GM12878 (cell line): ENCODE measurements at regions of chrX and their contacts with region 1.

Region 1: GRCh38 chrX:63506320-63506719 is 155.2 kb upstream of the SPIN4 start:
- DNase-seq: no peak
- ATAC-seq: peak; percentile 65
- H3K4me3 ChIP-seq: no peak overlapping the region
- H3K27ac ChIP-seq: no peak overlapping the region
- H3K4me1 ChIP-seq: no peaks in the 10 kb centered on the region
- H3K27me3 ChIP-seq: no peaks in the 10 kb centered on the region
- CTCF ChIP-seq: peak in 2 of 3 experiments; percentile 29 to 39; a peak in 3 of 6 replicates
- EP300 ChIP-seq: no peak
- POLR2A ChIP-seq: no peak
- RAD21 ChIP-seq: peak; percentile 52

Region 2: DNA sequence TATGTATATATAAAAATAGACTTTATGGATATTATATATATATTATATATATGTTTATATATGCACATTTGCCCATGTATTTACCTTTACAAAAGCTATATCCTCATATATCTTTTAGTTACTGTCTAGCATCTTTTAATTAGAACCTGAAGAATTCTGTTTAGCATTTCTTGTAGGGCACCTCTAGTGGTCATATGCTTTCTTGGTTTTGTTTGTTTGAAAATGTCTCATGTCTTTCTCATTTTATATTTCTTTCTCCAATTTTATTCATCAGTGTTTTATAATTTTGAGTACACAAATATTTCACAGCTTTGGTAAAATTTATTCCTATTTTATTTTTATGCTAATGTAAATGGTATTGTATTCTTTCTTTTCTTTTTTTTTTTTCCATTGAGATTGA is 84.9 kb before region 1 on chrX:
- CTCF ChIA-PET with region 1: no interaction called
- POLR2A ChIA-PET with region 1: no interaction called
- RAD21 ChIA-PET with region 1: no interaction called
- SMC1A ChIA-PET with region 1: no interaction called
- in situ Hi-C with region 1: no loop called
- intact Hi-C with region 1: no loop called
- DNase-seq: no peak
- ATAC-seq: no peak
- H3K4me3 ChIP-seq: no peak overlapping the region
- H3K27ac ChIP-seq: no peak overlapping the region
- H3K4me1 ChIP-seq: no peaks in the 10 kb centered on the region
- H3K27me3 ChIP-seq: no peaks in the 10 kb centered on the region
- CTCF ChIP-seq: no peak
- EP300 ChIP-seq: no peak
- POLR2A ChIP-seq: no peak
- RAD21 ChIP-seq: no peak

Region 3: GRCh38 chrX:63560601-63561218 is 54.4 kb after region 1 on chrX:
- CTCF ChIA-PET with region 1: no interaction called
- POLR2A ChIA-PET with region 1: no interaction called
- RAD21 ChIA-PET with region 1: no interaction called
- SMC1A ChIA-PET with region 1: no interaction called
- in situ Hi-C with region 1: loop called (anchors 5 kb)
- intact Hi-C with region 1: no loop called
- DNase-seq: peak; percentile 27
- ATAC-seq: peak; percentile 97
- H3K4me3 ChIP-seq: peak overlapping the region; percentile 77
- H3K27ac ChIP-seq: peak overlapping the region; percentile 22
- H3K4me1 ChIP-seq: no peaks in the 10 kb centered on the region
- H3K27me3 ChIP-seq: no peaks in the 10 kb centered on the region
- CTCF ChIP-seq: no peak
- EP300 ChIP-seq: no peak
- POLR2A ChIP-seq: peak; percentile 68
- RAD21 ChIP-seq: no peak